Endothelial cell of umbilical vein (primary cell): ENCODE measurements at regions of chr1 and their contacts with region 1.

Region 1: DNA sequence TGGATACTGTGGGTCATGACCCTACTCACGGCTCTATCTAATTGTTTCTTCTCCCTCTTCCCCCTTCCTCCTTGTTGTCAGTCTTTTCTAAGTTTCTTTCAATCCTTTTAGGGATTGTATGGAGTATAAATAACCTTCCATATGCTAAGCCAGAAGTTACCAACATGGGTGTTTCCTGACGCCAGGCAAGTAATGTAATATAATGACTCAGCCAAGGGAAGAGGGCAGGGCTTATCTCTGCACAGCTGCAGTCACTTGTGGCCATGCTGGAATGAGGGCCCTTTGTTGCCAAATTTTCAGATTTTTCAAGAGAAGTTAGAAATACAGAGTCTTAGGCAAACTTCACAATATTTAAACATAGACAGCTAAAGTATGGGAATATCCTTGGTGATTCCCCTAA is 194.6 kb downstream of the ST6GALNAC3 start:
- DNase-seq: peak; percentile 85
- H3K4me3 ChIP-seq: no peak overlapping the region
- H3K27ac ChIP-seq: peak overlapping the region; percentile 30
- H3K4me1 ChIP-seq: peaks cover 12% of the 10 kb centered on the region
- H3K27me3 ChIP-seq: no peaks in the 10 kb centered on the region
- CTCF ChIP-seq: no peak
- POLR2A ChIP-seq: no peak

Region 2: DNA sequence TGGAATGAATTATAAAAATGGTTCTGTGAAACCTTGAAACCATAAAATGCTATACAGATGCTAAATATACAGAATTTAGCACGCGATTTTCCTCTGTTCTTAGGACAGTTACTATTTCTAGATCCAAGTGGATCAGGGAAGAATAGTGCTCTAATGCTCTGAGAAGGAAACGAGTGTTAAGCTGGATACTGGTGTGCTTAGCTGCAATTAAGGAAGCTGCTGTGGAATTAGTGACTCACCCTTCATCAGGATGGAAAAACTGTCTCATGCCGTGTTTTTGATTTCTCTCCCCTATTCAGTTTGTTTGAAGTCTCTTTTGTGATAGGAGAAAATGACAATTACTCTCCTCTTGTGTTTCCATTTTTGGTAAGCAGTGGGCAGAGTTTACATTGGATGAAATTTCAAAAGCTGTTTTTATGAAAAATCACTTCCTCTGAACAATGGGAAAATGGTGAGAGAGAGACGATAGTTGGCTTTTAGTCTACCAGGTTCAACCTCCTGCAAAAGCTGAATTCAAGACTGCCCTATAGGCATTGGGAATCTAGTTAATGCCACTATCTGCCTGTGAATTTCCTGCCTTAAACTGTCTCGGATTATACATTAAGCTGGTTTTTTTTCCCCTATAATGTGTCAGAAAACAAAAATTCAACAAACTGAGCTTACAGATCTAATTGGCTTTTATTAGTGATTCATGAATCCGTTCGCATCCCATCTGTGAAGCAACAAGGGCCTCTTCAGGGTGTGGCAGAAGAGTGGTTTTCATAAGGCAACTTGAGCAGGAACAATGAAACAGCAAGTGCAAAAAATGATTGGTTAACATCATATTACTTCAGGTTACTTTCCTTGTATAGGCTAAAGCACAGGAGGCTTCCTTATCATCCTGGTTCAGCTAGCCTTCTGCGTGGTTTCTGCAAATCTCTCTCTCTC is 14.8 kb before region 1 on chr1:
- CTCF ChIA-PET with region 1: interaction called, 6 read pairs
- POLR2A ChIA-PET with region 1: no interaction called
- dilution Hi-C with region 1: no loop called
- intact Hi-C with region 1: loop called (anchors 2 kb)
- DNase-seq: peak; percentile 99
- H3K4me3 ChIP-seq: peak overlapping the region in 1 of 3 experiments; percentile 33
- H3K27ac ChIP-seq: peak overlapping the region; percentile 89
- H3K4me1 ChIP-seq: peaks cover 26% of the 10 kb centered on the region
- H3K27me3 ChIP-seq: no peaks in the 10 kb centered on the region
- CTCF ChIP-seq: no peak
- POLR2A ChIP-seq: no peak